BJ (cell line): ENCODE measurements at regions of chr1 and their contacts with region 1.

Region 1: DNA sequence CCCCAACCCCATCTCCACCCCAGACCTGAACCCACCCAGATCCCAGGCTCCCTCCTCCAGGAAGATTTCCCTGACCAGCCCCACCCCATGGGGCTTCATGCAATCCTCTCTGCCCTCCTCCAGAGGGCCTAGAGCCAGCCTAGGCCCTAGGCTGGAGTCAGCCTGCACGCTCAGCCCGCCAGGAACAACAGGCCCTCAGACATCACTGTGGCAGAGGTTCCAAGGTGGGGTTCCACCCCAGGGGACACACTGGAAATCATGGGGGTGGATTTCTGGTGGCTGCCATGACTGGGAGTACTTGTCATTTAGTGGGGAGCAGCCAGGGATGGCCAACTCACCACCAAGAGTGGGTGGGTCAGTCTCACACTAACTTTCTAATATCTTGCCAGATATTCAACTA is 122.0 kb downstream of the GLIS1 start:
- DNase-seq: no peak
- H3K4me3 ChIP-seq: no peak overlapping the region
- H3K27me3 ChIP-seq: no peaks in the 10 kb centered on the region
- CTCF ChIP-seq: no peak

Region 2: DNA sequence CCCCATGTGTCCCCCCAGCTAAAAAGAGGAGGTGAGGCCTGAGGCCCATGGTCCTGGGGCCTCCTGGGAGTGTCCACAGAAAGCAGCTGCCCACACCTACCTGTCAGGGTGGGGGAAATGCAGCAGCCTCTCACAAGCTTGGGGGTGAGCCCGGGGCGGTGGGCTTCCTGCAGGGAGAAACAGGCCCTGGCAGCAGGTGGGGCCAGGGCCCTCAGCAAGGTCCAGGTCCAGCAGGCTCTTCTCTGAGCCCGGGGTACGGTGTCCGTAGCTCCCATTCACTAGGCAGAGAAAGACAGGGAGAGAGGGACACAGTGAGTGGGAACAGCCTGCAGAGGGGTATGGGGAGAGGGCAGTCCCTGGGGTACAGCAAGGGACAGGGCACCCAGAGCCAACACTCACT is 16.9 kb before region 1 on chr1:
- CTCF ChIA-PET with region 1: interaction called, 4 read pairs
- POLR2A ChIA-PET with region 1: interaction called, 16 read pairs
- DNase-seq: no peak
- H3K4me3 ChIP-seq: no peak overlapping the region
- H3K27me3 ChIP-seq: no peaks in the 10 kb centered on the region
- CTCF ChIP-seq: no peak